Caco-2 (cell line): ENCODE measurements at regions of chr11 and their contacts with region 1.

Region 1: DNA sequence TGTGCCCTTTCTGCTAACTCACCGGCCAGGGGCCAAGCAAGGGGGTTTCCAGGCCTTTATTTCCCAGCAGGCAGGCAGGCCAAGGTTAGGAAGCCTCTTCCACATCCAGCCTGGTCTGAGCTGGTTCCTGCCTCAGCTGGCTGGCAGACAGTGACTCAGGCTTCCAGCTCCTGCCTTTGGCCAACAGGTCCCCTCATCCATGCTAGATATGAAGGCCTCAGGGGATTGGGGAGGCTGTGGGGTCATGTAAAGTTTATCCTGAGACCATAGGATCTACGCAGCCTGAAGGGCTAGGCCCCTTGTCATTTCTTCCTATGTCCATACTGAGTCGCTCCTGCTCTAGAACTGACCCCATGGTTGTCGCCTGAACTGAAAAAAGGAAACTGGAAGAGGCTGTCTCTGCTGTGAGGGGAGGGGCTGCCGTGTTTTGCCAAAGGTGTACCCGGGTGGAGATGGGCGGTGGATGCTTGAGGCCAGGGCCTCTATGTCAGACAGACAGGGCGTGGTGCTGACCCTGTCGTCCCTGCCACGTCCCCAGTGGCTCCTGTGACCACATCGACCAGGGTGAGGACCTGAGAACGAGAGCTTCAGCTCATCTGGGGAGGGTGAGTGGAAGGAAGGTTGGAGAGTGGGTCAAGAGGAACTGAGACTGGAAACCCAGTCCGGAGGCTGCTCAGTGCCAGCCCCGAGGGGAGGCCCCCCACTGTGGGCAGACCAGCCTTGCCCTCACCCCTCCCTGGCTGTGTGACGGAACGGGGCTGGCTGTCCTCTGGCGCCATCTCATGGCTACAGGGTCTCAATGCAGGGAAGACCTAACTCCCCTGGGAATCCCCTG is 17.0 kb downstream of the P2RY6 start:
- DNase-seq: peak; percentile 87 to 88
- H3K4me3 ChIP-seq: no peak overlapping the region
- H3K4me3 Mint-ChIP-seq: no peak overlapping the region
- H3K27ac Mint-ChIP-seq: peak overlapping the region; percentile 51
- H3K4me1 ChIP-seq: peaks cover 57% of the 10 kb centered on the region
- H3K4me1 Mint-ChIP-seq: peaks cover 27% of the 10 kb centered on the region
- H3K27me3 ChIP-seq: no peaks in the 10 kb centered on the region
- H3K27me3 Mint-ChIP-seq: no peaks in the 10 kb centered on the region
- CTCF ChIP-seq: peak; percentile 99

Region 2: DNA sequence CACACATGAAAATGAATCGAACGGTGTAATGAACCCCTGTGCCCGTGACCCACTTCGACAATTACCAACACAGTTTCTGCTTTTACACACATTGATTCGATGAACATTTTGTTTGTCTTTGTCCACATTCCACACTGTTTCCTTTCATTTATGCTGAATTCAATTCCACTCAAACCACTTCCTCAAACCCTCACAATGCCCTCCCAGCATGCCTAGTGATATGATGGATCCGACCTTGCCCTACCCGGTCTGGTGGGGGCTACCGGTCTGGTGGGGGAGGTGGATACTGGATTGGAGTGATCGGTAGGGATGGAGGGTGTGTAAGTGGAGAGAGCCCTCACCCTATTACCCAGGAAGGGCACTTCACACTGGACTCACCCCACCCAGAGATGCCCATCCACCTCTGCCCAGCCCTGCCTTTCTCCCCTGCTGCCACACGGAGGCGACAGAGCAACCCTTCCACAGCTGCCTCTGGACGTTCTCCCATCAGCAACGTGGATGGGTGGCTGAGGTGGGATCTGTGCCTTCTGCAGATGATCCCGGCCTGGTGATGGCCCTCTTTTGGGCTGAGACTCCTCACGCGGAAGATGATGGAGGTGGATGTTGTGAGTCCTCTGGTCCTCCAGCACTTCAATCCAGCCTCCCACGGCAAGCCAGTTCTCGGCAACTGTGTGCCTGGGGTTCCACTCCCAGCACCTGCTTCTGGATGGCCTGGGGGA is 104.0 kb before region 1 on chr11:
- CTCF ChIA-PET with region 1: interaction called, 16 read pairs
- POLR2A ChIA-PET with region 1: interaction called, 3 read pairs
- intact Hi-C with region 1: loop called (anchors 1 kb)
- DNase-seq: peak; percentile 85 to 88
- H3K4me3 ChIP-seq: no peak overlapping the region
- H3K4me3 Mint-ChIP-seq: no peak overlapping the region
- H3K27ac Mint-ChIP-seq: no peak overlapping the region
- H3K4me1 ChIP-seq: peaks cover 21% of the 10 kb centered on the region
- H3K4me1 Mint-ChIP-seq: peaks cover 7% of the 10 kb centered on the region
- H3K27me3 ChIP-seq: no peaks in the 10 kb centered on the region
- H3K27me3 Mint-ChIP-seq: no peaks in the 10 kb centered on the region
- CTCF ChIP-seq: peak; percentile 98 to 99

Region 3: GRCh38 chr11:73218106-73218829 is 70.8 kb before region 1 on chr11 and contains the start of gene P2RY2:
- CTCF ChIA-PET with region 1: no interaction called
- POLR2A ChIA-PET with region 1: no interaction called
- intact Hi-C with region 1: loop called (anchors 2 kb)
- DNase-seq: peak; percentile 87 to 94
- H3K4me3 ChIP-seq: peak within 1 kb of the TSS; percentile 57
- H3K4me3 Mint-ChIP-seq: peak within 1 kb of the TSS; percentile 81
- H3K27ac Mint-ChIP-seq: peak within 1 kb of the TSS; percentile 40
- H3K4me1 ChIP-seq: peaks cover 38% of the 10 kb centered on the region
- H3K4me1 Mint-ChIP-seq: peaks cover 23% of the 10 kb centered on the region
- H3K27me3 ChIP-seq: no peaks in the 10 kb centered on the region
- H3K27me3 Mint-ChIP-seq: no peaks in the 10 kb centered on the region
- CTCF ChIP-seq: peak; percentile 87
- total RNA-seq, gene P2RY2: 10.4 and 11.4 TPM in 2 replicates

Region 4: DNA sequence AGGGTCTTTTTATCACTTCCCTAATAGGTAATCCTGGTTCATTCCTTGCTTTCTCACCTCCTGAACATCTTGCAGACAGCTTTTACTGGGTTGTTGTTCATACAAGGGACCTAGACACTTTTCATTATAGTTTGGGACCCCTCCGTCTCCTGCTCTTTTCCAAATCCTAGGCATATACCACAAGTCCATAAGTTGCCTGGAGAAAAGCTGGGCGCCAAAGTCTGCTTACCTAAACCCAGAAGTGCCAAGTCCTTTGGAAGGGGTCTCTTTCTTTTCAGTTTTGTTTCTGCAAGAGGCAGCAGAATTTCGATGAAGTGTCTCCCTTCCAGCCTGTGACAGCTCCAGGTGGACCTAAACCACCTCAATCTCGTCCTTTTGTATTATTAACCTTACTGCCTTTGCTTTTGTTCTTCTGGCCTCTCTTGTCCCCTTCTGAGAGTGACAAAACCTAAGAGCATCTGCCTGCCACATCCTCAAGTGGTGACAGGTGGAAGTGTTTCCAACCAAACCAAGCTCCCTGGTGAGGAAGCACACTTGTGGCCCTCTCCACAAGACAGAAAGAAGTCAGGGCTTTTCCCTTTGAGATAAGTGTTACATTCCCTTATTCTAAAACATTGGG is 36.4 kb before region 1 on chr11:
- CTCF ChIA-PET with region 1: interaction called, 18 read pairs
- POLR2A ChIA-PET with region 1: no interaction called
- intact Hi-C with region 1: loop called (anchors 1 kb)
- DNase-seq: peak; percentile 71 to 73
- H3K4me3 ChIP-seq: no peak overlapping the region
- H3K4me3 Mint-ChIP-seq: no peak overlapping the region
- H3K27ac Mint-ChIP-seq: no peak overlapping the region
- H3K4me1 ChIP-seq: peaks cover 8% of the 10 kb centered on the region
- H3K4me1 Mint-ChIP-seq: peaks cover 17% of the 10 kb centered on the region
- H3K27me3 ChIP-seq: no peaks in the 10 kb centered on the region
- H3K27me3 Mint-ChIP-seq: no peaks in the 10 kb centered on the region
- CTCF ChIP-seq: peak; percentile 55 to 70

Region 5: DNA sequence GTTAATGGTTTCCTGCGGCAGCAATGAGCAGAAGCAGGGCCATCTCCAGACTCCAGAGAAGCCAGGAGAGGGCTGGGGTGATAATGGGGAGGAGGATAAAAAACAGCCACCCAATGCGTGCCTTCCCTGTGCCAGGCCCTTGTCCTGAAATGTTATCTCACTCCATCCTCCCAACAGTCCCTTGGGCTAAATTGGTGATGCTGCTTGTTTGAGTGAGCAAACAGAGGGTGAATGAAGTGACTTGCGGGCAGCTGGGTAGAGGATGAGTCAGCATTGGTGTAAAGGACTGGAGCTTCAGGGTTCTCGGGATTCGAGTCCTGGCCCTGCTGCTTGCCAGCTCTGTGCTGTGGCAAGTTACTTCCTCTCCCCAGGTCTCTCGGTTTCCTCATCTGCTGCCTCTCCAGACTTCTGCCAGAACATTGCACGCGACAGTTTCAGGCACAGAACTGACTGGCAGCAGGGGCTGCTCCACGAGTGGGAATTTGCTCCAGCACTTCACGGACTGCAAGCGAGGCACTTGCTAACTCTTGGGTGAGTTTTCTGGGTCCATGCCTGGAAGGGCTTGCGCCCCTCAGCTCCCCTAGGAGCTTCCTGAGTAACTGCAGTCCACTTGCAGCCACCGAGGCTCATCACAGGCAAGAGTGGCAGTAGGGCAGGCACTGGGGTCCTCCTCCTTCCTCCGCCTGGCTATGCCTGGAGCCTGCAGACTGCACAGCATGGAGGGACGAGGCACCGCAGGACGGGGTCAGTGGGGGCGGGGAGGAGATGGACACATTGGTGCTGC is 17.0 kb before region 1 on chr11 and contains the start of gene P2RY6:
- CTCF ChIA-PET with region 1: interaction called, 20 read pairs
- POLR2A ChIA-PET with region 1: interaction called, 3 read pairs
- intact Hi-C with region 1: loop called (anchors 1 kb)
- DNase-seq: peak; percentile 88 to 93
- H3K4me3 ChIP-seq: peak within 1 kb of the TSS; percentile 38
- H3K4me3 Mint-ChIP-seq: peak within 1 kb of the TSS; percentile 80
- H3K27ac Mint-ChIP-seq: peak within 1 kb of the TSS; percentile 99
- H3K4me1 ChIP-seq: peaks cover 79% of the 10 kb centered on the region
- H3K4me1 Mint-ChIP-seq: peaks cover 81% of the 10 kb centered on the region
- H3K27me3 ChIP-seq: no peaks in the 10 kb centered on the region
- H3K27me3 Mint-ChIP-seq: no peaks in the 10 kb centered on the region
- CTCF ChIP-seq: no peak
- total RNA-seq, gene P2RY6: 48.4 and 55.7 TPM in 2 replicates

Region 6: GRCh38 chr11:73439002-73439843 is 150.1 kb after region 1 on chr11:
- CTCF ChIA-PET with region 1: no interaction called
- POLR2A ChIA-PET with region 1: no interaction called
- intact Hi-C with region 1: no loop called
- DNase-seq: no peak
- H3K4me3 ChIP-seq: no peak overlapping the region
- H3K4me3 Mint-ChIP-seq: no peak overlapping the region
- H3K27ac Mint-ChIP-seq: no peak overlapping the region
- H3K4me1 ChIP-seq: no peaks in the 10 kb centered on the region
- H3K4me1 Mint-ChIP-seq: peaks cover 8% of the 10 kb centered on the region
- H3K27me3 ChIP-seq: no peaks in the 10 kb centered on the region
- H3K27me3 Mint-ChIP-seq: no peaks in the 10 kb centered on the region
- CTCF ChIP-seq: no peak